OCI-LY7 (cell line): ENCODE measurements at regions of chr20 and their contacts with region 1.

Region 1: DNA sequence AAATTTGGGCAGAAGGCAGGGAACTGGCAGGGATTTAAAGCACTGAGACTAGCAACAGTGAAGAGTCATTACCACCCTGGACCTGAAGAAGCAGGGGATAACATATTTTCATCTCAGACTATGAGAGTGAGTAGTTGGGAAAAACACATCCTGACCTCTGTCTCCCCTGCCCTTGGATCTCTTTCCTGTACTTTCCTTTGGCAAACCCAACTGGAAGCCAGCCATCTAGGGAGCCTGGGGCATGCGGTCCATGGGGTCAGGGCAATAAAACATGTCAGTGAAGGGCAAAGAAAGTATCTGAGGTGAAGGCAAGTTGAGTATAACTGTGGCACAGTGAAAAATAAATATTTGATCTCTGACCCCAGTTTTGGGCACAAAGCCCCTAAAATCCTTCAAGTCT is 698.2 kb downstream of the DOK5 start:
- DNase-seq: no peak
- H3K4me3 ChIP-seq: no peak overlapping the region
- H3K27ac ChIP-seq: no peak overlapping the region
- H3K4me1 ChIP-seq: no peaks in the 10 kb centered on the region
- CTCF ChIP-seq: no peak

Region 2: DNA sequence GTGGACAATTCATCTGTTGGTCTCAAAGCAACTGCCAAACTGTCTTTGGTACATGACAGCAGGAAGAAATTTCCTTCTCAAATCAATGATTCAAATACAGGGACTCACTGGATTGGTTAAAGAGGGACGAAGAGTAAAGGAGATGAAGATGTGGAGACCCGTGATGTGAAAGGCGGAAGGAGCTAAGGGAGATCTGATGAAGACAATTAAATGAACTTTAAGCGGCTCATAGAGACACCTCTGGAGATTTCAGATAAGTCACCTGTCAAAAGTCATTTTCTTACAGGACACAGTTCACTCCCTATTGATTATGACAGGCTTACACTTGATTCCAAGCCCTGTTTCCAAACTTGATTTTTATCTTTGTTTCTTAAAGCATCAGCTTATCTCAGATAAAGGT is 231.9 kb before region 1 on chr20:
- CTCF ChIA-PET with region 1: no interaction called
- POLR2A ChIA-PET with region 1: no interaction called
- intact Hi-C with region 1: no loop called
- DNase-seq: no peak
- H3K4me3 ChIP-seq: no peak overlapping the region
- H3K27ac ChIP-seq: no peak overlapping the region
- H3K4me1 ChIP-seq: no peaks in the 10 kb centered on the region
- CTCF ChIP-seq: no peak

Region 3: GRCh38 chr20:55067158-55067825 is 106.3 kb before region 1 on chr20:
- CTCF ChIA-PET with region 1: no interaction called
- POLR2A ChIA-PET with region 1: no interaction called
- intact Hi-C with region 1: no loop called
- DNase-seq: no peak
- H3K4me3 ChIP-seq: no peak overlapping the region
- H3K27ac ChIP-seq: no peak overlapping the region
- H3K4me1 ChIP-seq: no peaks in the 10 kb centered on the region
- CTCF ChIP-seq: no peak

Region 4: DNA sequence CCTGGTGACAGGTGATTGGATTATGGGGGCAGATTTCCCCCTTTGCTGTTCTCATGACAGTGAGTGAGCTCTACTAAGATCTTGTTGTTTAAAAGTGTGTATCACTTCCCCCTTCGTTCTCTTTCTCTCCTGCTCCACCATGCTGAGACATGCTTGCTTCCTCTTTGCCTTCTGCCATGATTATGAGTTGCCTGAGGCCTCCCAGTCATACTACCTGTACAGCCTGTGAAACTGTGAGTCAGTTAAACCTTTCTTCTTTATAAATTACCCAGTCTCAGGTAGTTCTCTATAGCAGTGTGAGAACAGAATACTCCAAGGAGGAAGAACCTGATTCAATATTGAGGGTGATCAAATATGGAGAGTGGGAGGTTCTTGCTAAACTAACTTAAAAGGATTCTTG is 26.7 kb after region 1 on chr20:
- CTCF ChIA-PET with region 1: no interaction called
- POLR2A ChIA-PET with region 1: no interaction called
- intact Hi-C with region 1: loop called (anchors 1 kb)
- DNase-seq: no peak
- H3K4me3 ChIP-seq: no peak overlapping the region
- H3K27ac ChIP-seq: no peak overlapping the region
- H3K4me1 ChIP-seq: no peaks in the 10 kb centered on the region
- CTCF ChIP-seq: no peak